GM18951 (cell line): ENCODE measurements at regions of chr4 and their contacts with region 1.

Region 1: DNA sequence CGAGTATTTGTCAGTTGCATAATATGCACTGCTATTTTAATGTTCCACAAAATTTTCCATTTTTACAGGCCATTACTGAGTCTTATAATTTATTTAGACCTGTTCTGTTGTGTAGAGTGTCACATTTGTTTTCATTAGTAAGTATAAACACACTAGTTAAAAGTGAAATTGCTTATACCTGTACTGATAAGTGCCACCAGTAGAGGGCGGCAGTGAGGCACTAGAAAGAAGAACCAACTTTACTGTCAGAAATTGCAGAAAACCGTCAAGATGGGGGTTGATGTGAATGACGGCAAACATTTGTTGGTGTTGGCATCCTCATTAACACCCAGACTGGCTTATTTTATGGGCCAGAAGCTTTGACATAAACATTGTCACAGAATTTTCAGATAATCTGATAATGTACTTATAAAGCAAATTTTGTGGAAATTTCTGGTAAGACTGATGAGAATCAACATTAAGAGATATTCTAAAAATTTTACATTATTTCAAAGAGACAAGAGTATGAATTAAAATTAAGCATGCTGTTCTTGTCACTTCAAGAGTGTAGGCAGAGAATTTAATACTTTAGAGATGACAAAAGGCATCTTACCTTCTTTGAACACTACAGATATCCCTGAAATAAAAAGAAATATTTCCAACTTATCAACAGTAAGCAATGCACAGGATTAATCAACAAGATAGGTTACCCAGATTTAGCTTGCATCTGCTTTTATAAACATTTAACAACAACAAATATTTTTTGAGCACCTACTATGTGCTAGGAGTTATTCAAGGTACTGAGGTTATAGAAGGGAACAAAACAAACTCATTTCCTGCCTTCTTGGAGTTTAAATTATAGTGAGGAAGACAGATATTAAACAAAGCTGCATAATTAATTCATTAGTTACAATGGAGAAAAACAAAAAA is 24.9 kb downstream of the ALPK1 start:
- POLR2A ChIP-seq: no peak

Region 2: DNA sequence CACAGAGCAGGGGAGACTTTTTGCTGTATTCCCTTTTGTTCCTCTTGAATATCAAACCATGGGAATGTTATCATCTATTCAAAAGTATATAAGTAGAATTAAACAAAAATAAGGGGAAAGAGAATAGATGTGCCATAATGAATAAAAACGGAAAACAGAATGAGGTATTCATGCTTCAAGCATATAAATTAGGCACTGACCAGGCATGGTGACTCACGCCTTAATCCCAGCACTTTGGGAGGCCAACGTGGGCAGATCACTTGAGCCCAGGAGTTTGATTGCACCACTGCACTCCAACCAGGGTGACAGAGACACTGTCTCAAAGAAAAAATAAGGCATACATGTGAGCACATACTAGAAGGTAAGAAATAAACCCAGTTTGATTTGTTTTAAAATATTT is 210.2 kb after region 1 on chr4:
- in situ Hi-C with region 1: loop called (anchors 5 kb)
- POLR2A ChIP-seq: no peak

Region 3: DNA sequence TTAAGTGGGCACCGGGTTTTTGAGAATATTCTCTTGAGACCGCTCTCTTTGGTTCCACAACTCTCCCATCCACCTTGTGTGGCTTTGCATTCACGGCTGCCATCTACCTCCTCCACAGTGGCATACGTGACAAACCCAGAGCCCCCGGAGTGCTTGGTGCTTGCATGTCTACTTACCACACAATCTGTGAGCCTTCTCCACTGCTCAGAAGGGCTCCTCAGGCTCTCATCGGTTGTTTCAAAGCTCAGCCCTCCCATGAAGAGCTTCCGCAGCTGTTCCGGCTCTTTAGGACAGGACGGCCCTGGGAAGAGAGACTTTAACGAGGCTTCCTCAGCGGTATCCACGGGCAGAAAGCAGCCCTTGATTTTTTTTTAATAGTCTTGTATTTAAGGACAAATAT is 559.8 kb after region 1 on chr4:
- in situ Hi-C with region 1: no loop called
- POLR2A ChIP-seq: no peak